T-cell (primary cell): ENCODE measurements at regions of chr12 and their contacts with region 1.

Region 1: GRCh38 chr12:124795081-124795948 is 68.3 kb downstream of the SCARB1 start:
- DNase-seq: no peak
- ATAC-seq: no peak
- H3K4me3 ChIP-seq: no peak overlapping the region
- H3K4me3 Mint-ChIP-seq: no peak overlapping the region
- H3K27ac ChIP-seq: no peak overlapping the region
- H3K27ac Mint-ChIP-seq: peak overlapping the region; percentile 16 to 92
- H3K4me1 ChIP-seq: peaks cover 0 to 3% of the 10 kb centered on the region in 2 experiments
- H3K4me1 Mint-ChIP-seq: peaks cover 0 to 27% (median 21%) of the 10 kb centered on the region in 3 donors
- H3K27me3 ChIP-seq: no peaks in the 10 kb centered on the region
- H3K27me3 Mint-ChIP-seq: no peaks in the 10 kb centered on the region

Region 2: GRCh38 chr12:124693111-124693723 is 102.1 kb before region 1 on chr12:
- CTCF ChIA-PET with region 1: interaction called in 1 of 2 experiments, 11 read pairs
- POLR2A ChIA-PET with region 1: no interaction called
- DNase-seq: no peak
- ATAC-seq: no peak
- H3K4me3 ChIP-seq: no peak overlapping the region
- H3K4me3 Mint-ChIP-seq: no peak overlapping the region
- H3K27ac ChIP-seq: no peak overlapping the region
- H3K27ac Mint-ChIP-seq: no peak overlapping the region
- H3K4me1 ChIP-seq: peaks cover 9 to 27% of the 10 kb centered on the region in 2 experiments
- H3K4me1 Mint-ChIP-seq: peaks cover 14 to 19% (median 16%) of the 10 kb centered on the region in 3 donors
- H3K27me3 ChIP-seq: peaks cover 0 to 24% of the 10 kb centered on the region in 2 experiments
- H3K27me3 Mint-ChIP-seq: peaks cover 0 to 2% of the 10 kb centered on the region in 2 donors